Caco-2 (cell line): ENCODE measurements at regions of chr6 and their contacts with region 1.

Region 1: GRCh38 chr6:2791124-2791974 is 26.2 kb downstream of the WRNIP1 start:
- DNase-seq: peak; percentile 67 to 74
- H3K4me3 ChIP-seq: no peak overlapping the region
- H3K4me3 Mint-ChIP-seq: no peak overlapping the region
- H3K27ac Mint-ChIP-seq: no peak overlapping the region
- H3K4me1 ChIP-seq: peaks cover 8% of the 10 kb centered on the region; the same call in 1 of the 2 replicates
- H3K4me1 Mint-ChIP-seq: peaks cover 7% of the 10 kb centered on the region
- H3K27me3 ChIP-seq: no peaks in the 10 kb centered on the region
- H3K27me3 Mint-ChIP-seq: no peaks in the 10 kb centered on the region
- CTCF ChIP-seq: peak; percentile 78

Region 2: GRCh38 chr6:2514965-2515555 is 276.3 kb before region 1 on chr6:
- CTCF ChIA-PET with region 1: no interaction called
- POLR2A ChIA-PET with region 1: no interaction called
- intact Hi-C with region 1: no loop called
- DNase-seq: peak; percentile 91 to 96
- H3K4me3 ChIP-seq: peak overlapping the region; percentile 13
- H3K4me3 Mint-ChIP-seq: peak overlapping the region; percentile 72
- H3K27ac Mint-ChIP-seq: peak overlapping the region; percentile 95
- H3K4me1 ChIP-seq: peaks cover 59% of the 10 kb centered on the region
- H3K4me1 Mint-ChIP-seq: peaks cover 26% of the 10 kb centered on the region
- H3K27me3 ChIP-seq: no peaks in the 10 kb centered on the region
- H3K27me3 Mint-ChIP-seq: no peaks in the 10 kb centered on the region
- CTCF ChIP-seq: no peak

Region 3: DNA sequence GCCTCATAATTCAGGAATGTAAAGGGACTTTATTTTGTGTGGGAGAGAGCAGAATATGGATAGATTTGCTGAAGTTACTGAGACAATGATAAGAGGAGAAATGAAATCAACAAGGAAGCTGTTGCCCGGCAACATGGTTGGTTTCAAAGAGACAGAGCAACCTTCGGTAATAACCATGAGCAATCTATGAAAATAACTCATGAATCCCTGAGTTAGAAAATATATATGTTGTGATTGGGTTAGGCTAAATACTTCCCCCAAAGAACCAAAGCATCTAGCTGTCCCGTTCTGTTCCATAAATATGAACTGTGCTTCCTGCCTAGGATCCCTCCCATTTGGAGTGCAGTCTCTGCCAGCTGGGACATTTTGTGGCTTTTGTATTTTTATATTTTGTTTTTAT is 27.2 kb after region 1 on chr6:
- CTCF ChIA-PET with region 1: interaction called, 10 read pairs
- POLR2A ChIA-PET with region 1: no interaction called
- intact Hi-C with region 1: no loop called
- DNase-seq: no peak
- H3K4me3 ChIP-seq: no peak overlapping the region
- H3K4me3 Mint-ChIP-seq: peak overlapping the region; percentile 50
- H3K27ac Mint-ChIP-seq: peak overlapping the region; percentile 40
- H3K4me1 ChIP-seq: peaks cover 6% of the 10 kb centered on the region
- H3K4me1 Mint-ChIP-seq: peaks cover 12% of the 10 kb centered on the region
- H3K27me3 ChIP-seq: no peaks in the 10 kb centered on the region
- H3K27me3 Mint-ChIP-seq: no peaks in the 10 kb centered on the region
- CTCF ChIP-seq: no peak

Region 4: GRCh38 chr6:2848851-2849250 is 57.5 kb after region 1 on chr6:
- CTCF ChIA-PET with region 1: interaction called, 29 read pairs
- POLR2A ChIA-PET with region 1: no interaction called
- intact Hi-C with region 1: loop called (anchors 1 kb)
- DNase-seq: no peak
- H3K4me3 ChIP-seq: no peak overlapping the region
- H3K4me3 Mint-ChIP-seq: no peak overlapping the region
- H3K27ac Mint-ChIP-seq: no peak overlapping the region
- H3K4me1 ChIP-seq: peaks cover 27% of the 10 kb centered on the region
- H3K4me1 Mint-ChIP-seq: peaks cover 16% of the 10 kb centered on the region
- H3K27me3 ChIP-seq: no peaks in the 10 kb centered on the region
- H3K27me3 Mint-ChIP-seq: no peaks in the 10 kb centered on the region
- CTCF ChIP-seq: no peak

Region 5: GRCh38 chr6:2911171-2911570 is 119.8 kb after region 1 on chr6:
- CTCF ChIA-PET with region 1: interaction called, 7 read pairs
- POLR2A ChIA-PET with region 1: no interaction called
- intact Hi-C with region 1: loop called (anchors 1 kb)
- DNase-seq: no peak
- H3K4me3 ChIP-seq: no peak overlapping the region
- H3K4me3 Mint-ChIP-seq: no peak overlapping the region
- H3K27ac Mint-ChIP-seq: no peak overlapping the region
- H3K4me1 ChIP-seq: peaks cover 22% of the 10 kb centered on the region
- H3K4me1 Mint-ChIP-seq: peaks cover 46% of the 10 kb centered on the region
- H3K27me3 ChIP-seq: no peaks in the 10 kb centered on the region
- H3K27me3 Mint-ChIP-seq: no peaks in the 10 kb centered on the region
- CTCF ChIP-seq: no peak

Region 6: GRCh38 chr6:2988426-2989331 is 197.3 kb after region 1 on chr6:
- CTCF ChIA-PET with region 1: interaction called, 10 read pairs
- POLR2A ChIA-PET with region 1: interaction called, 3 read pairs
- intact Hi-C with region 1: loop called (anchors 1 kb)
- DNase-seq: peak; percentile 92 to 94
- H3K4me3 ChIP-seq: peak overlapping the region; percentile 79
- H3K4me3 Mint-ChIP-seq: peak overlapping the region; percentile 76
- H3K27ac Mint-ChIP-seq: peak overlapping the region; percentile 97
- H3K4me1 ChIP-seq: peaks cover 6% of the 10 kb centered on the region; the same call in 1 of the 2 replicates
- H3K4me1 Mint-ChIP-seq: peaks cover 12% of the 10 kb centered on the region
- H3K27me3 ChIP-seq: no peaks in the 10 kb centered on the region
- H3K27me3 Mint-ChIP-seq: no peaks in the 10 kb centered on the region
- CTCF ChIP-seq: peak; percentile 79 to 86